HEK293 (cell line): ENCODE measurements at regions of chrX and their contacts with region 1.

Region 1: GRCh38 chrX:48696301-48697181 is at the start of gene SUV39H1:
- H3K4me3 ChIP-seq: peak within 1 kb of the TSS; percentile 60
- H3K27ac ChIP-seq: peak within 1 kb of the TSS; percentile 78
- H3K4me1 ChIP-seq: no peaks in the 10 kb centered on the region
- CTCF ChIP-seq: no peak

Region 2: GRCh38 chrX:48539345-48540027 is 157.1 kb before region 1 on chrX and contains the start of gene TBC1D25:
- CTCF ChIA-PET with region 1: no interaction called
- POLR2A ChIA-PET with region 1: no interaction called
- H3K4me3 ChIP-seq: peak within 1 kb of the TSS; percentile 68
- H3K27ac ChIP-seq: peak within 1 kb of the TSS; percentile 74
- H3K4me1 ChIP-seq: no peaks in the 10 kb centered on the region
- CTCF ChIP-seq: peak; percentile 81

Region 3: DNA sequence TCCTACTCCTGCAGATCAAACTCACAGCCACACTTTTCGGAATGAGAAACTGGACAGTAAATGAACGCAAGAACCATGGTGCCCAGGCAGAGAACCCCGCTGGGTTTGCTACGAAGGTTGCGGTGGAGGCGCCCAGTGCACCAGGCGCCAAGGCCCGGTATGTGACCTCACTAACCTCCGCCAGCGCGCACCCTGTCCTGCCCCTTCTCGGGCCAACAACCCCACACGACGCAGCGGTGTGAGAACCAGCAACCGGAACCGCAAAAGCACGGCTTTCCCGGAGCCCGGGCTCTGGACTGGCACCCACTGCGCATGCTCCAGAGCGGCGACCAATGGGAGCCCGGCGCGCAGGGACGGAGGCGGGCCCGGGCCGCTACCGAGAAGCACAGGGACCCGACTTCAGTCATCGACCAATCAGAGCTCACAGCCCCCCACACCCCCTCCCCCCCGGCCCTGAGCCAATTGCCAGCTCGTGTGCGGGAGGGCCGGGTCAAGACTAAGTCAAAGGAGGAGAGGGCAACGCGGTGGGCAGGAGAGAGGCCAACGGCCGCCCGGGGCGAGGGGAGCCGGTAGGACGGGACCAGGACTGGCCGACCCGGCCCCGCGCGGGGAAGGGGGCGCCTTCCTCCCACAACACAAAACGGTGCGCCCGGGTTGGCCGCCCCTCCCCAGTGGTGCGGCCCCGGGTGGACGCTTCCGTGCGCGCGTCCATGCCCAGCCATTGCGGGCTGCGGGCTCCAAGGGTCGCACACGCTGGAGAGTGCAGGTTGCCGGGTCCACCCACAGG is 20.2 kb before region 1 on chrX:
- CTCF ChIA-PET with region 1: no interaction called
- POLR2A ChIA-PET with region 1: interaction called, 19 read pairs
- H3K4me3 ChIP-seq: peak overlapping the region; percentile 68
- H3K27ac ChIP-seq: peak overlapping the region; percentile 77
- H3K4me1 ChIP-seq: peaks cover 3% of the 10 kb centered on the region; the same call in 1 of the 2 replicates
- CTCF ChIP-seq: no peak; the same call in 1 of the 2 replicates

Region 4: GRCh38 chrX:48761674-48762471 is 65.3 kb after region 1 on chrX and contains the start of gene GLOD5:
- CTCF ChIA-PET with region 1: no interaction called
- POLR2A ChIA-PET with region 1: no interaction called
- H3K4me3 ChIP-seq: no peak within 1 kb of the TSS
- H3K27ac ChIP-seq: no peak within 1 kb of the TSS
- H3K4me1 ChIP-seq: no peaks in the 10 kb centered on the region
- CTCF ChIP-seq: 0 out of 2 replicates have a peak, but pooled peaks have one; percentile 17

Region 5: GRCh38 chrX:48937054-48937907 is 240.7 kb after region 1 on chrX:
- CTCF ChIA-PET with region 1: no interaction called
- POLR2A ChIA-PET with region 1: no interaction called
- H3K4me3 ChIP-seq: no peak overlapping the region
- H3K27ac ChIP-seq: no peak overlapping the region
- H3K4me1 ChIP-seq: no peaks in the 10 kb centered on the region
- CTCF ChIP-seq: no peak